ENCODE measurements at regions of chr6 and their contacts with region 1.

Region 1: DNA sequence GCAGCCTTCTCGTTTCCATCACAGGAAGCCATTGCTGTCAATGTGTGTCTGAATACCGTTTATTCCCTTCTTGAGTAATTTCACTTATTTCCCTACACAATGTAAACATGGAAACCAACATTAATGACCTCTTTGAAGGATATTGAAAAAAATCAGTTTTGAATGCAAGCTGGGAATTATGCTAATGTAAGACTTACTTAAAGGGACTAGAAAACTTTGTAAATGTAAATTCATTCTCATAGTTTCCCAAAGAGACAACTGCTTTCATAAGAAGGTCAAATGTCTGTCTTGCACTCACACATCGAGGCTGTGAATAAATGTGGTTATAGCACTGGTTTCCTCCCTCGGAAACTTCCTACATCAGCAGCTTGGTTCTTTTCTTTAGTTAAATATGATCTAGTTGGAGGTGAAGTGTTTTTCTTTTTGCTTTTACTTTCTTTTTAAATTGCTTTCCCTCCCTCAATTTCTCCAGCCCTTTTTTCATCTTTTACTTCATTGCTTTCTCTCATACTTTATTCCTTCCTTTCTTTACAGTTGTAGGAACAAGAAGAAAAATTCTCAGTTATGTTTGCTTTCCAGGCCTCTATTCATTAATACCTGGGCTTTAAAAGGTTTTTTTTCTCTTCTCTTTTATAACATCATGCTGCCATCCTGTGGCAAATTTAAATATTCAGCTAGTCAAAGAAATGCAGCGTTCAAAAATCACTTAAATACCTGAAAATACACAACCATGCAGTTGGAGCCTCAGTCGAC is 108.3 kb downstream of the TNFAIP3 start:
- DNase-seq: peak in 5 of 14 experiments; percentile 17 to 85 (median 72)
- ATAC-seq: peak; percentile 81
- H3K4me3 ChIP-seq: peak overlapping the region; percentile 19
- H3K4me3 Mint-ChIP-seq: peak overlapping the region; percentile 82
- H3K27ac ChIP-seq: peak overlapping the region; percentile 64 to 72
- H3K27ac Mint-ChIP-seq: peak overlapping the region; percentile 84
- H3K4me1 ChIP-seq: peaks cover 37% of the 10 kb centered on the region
- H3K4me1 Mint-ChIP-seq: peaks cover 29% of the 10 kb centered on the region
- H3K27me3 ChIP-seq: no peaks in the 10 kb centered on the region
- H3K27me3 Mint-ChIP-seq: no peaks in the 10 kb centered on the region
- CTCF ChIP-seq: peak; percentile 60

Region 2: DNA sequence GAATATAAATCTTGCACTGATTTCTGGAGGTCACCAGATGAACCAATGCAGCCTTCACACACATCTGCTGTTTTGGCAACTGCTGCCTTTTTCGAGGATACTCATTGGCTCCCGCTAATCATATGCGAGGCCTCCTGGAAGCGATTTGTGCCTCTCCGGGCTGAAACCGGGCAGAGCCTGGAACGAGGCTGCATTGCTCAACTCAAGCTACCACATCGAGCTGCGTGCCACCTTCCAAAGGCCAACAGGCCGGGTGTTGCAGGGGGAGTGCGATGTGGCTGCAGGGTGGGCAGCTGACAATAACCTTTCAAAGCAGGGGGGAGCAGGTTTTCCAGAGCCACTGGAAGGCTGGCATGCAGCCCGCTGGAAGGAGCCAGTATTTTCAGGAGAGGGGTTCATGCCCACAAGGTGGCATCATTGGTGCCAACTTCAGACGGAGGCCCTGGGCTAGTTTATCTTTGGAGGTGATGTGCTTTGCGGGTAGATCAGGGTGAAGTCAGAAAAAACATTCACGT is 633.6 kb before region 1 on chr6:
- CTCF ChIA-PET with region 1: no interaction called
- POLR2A ChIA-PET with region 1: no interaction called
- intact Hi-C with region 1: loop called in 1 of 2 experiments (anchors 10 kb)
- DNase-seq: peak; percentile 29 to 80 (median 50)
- ATAC-seq: peak; percentile 39
- H3K4me3 ChIP-seq: no peak overlapping the region
- H3K4me3 Mint-ChIP-seq: peak overlapping the region; percentile 81
- H3K27ac ChIP-seq: no peak overlapping the region
- H3K27ac Mint-ChIP-seq: no peak overlapping the region
- H3K4me1 ChIP-seq: peaks cover 12% of the 10 kb centered on the region
- H3K4me1 Mint-ChIP-seq: peaks cover 18% of the 10 kb centered on the region
- H3K27me3 ChIP-seq: peaks cover 0 to 6% of the 10 kb centered on the region in 2 experiments
- H3K27me3 Mint-ChIP-seq: peaks cover 9% of the 10 kb centered on the region
- CTCF ChIP-seq: peak; percentile 72

Region 3: DNA sequence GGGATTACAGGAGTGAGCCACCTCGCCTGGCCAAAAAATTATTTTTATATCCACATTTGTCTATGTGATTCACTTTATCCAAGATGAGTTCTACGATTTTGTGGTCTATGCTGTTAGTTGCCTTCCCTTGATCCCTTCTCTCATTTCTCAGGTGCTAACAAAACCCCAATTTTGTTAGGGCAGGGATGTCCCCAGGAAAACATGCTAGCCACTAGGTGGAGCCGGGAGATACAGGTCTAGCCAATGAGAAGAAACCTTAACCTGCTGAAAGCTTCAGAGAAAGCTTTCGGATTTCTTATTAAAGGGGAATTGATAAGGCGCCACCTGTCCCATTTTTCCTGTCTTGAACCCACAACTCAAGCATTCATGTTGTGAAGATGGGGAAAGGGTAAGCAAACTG is 313.8 kb before region 1 on chr6:
- CTCF ChIA-PET with region 1: no interaction called
- POLR2A ChIA-PET with region 1: no interaction called
- intact Hi-C with region 1: loop called in 1 of 2 experiments (anchors 5 kb)
- DNase-seq: peak in 11 of 14 experiments; percentile 4 to 75 (median 33)
- ATAC-seq: no peak
- H3K4me3 ChIP-seq: no peak overlapping the region
- H3K4me3 Mint-ChIP-seq: no peak overlapping the region
- H3K27ac ChIP-seq: no peak overlapping the region
- H3K27ac Mint-ChIP-seq: no peak overlapping the region
- H3K4me1 ChIP-seq: no peaks in the 10 kb centered on the region
- H3K4me1 Mint-ChIP-seq: no peaks in the 10 kb centered on the region
- H3K27me3 ChIP-seq: no peaks in the 10 kb centered on the region
- H3K27me3 Mint-ChIP-seq: no peaks in the 10 kb centered on the region
- CTCF ChIP-seq: peak; percentile 33

Region 4: DNA sequence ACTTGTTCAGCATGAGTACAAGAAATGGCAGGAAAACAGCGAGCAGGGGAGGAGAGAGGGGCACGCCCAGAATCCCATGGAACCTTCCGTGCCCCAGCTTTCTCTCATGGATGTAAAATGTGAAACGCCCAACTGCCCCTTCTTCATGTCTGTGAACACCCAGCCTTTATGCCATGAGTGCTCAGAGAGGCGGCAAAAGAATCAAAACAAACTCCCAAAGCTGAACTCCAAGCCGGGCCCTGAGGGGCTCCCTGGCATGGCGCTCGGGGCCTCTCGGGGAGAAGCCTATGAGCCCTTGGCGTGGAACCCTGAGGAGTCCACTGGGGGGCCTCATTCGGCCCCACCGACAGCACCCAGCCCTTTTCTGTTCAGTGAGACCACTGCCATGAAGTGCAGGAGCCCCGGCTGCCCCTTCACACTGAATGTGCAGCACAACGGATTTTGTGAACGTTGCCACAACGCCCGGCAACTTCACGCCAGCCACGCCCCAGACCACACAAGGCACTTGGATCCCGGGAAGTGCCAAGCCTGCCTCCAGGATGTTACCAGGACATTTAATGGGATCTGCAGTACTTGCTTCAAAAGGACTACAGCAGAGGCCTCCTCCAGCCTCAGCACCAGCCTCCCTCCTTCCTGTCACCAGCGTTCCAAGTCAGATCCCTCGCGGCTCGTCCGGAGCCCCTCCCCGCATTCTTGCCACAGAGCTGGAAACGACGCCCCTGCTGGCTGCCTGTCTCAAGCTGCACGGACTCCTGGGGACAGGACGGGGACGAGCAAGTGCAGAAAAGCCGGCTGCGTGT is 96.7 kb before region 1 on chr6:
- CTCF ChIA-PET with region 1: interaction called, 7 read pairs
- POLR2A ChIA-PET with region 1: no interaction called
- intact Hi-C with region 1: loop called in 1 of 2 experiments (anchors 5 kb)
- DNase-seq: peak in 4 of 14 experiments; percentile 22 to 62 (median 46)
- ATAC-seq: no peak
- H3K4me3 ChIP-seq: no peak overlapping the region
- H3K4me3 Mint-ChIP-seq: peak overlapping the region; percentile 76
- H3K27ac ChIP-seq: peak overlapping the region in 1 of 2 donors; percentile 37
- H3K27ac Mint-ChIP-seq: peak overlapping the region; percentile 95
- H3K4me1 ChIP-seq: peaks cover 68% of the 10 kb centered on the region
- H3K4me1 Mint-ChIP-seq: peaks cover 88% of the 10 kb centered on the region
- H3K27me3 ChIP-seq: no peaks in the 10 kb centered on the region
- H3K27me3 Mint-ChIP-seq: peaks cover 8% of the 10 kb centered on the region
- CTCF ChIP-seq: no peak

Region 5: GRCh38 chr6:137944793-137945498 is 30.4 kb before region 1 on chr6:
- CTCF ChIA-PET with region 1: interaction called, 11 read pairs
- POLR2A ChIA-PET with region 1: interaction called, 5 read pairs
- intact Hi-C with region 1: no loop called
- DNase-seq: peak in 5 of 14 experiments; percentile 10 to 69 (median 53)
- ATAC-seq: peak; percentile 71
- H3K4me3 ChIP-seq: no peak overlapping the region
- H3K4me3 Mint-ChIP-seq: no peak overlapping the region
- H3K27ac ChIP-seq: no peak overlapping the region
- H3K27ac Mint-ChIP-seq: no peak overlapping the region
- H3K4me1 ChIP-seq: peaks cover 5% of the 10 kb centered on the region
- H3K4me1 Mint-ChIP-seq: peaks cover 20% of the 10 kb centered on the region
- H3K27me3 ChIP-seq: no peaks in the 10 kb centered on the region
- H3K27me3 Mint-ChIP-seq: no peaks in the 10 kb centered on the region
- CTCF ChIP-seq: peak; percentile 96

Measured in CD4-positive, alpha-beta T cell (primary cell).